Right cardiac atrium (tissue), 5 donors: ENCODE measurements at regions of chr5 and their contacts with region 1.

Region 1: GRCh38 chr5:45779874-45780671 is 83.9 kb upstream of the HCN1 start:
- DNase-seq: no peak
- ATAC-seq: no peak
- H3K4me3 ChIP-seq: no peak overlapping the region
- H3K27ac ChIP-seq: no peak overlapping the region
- H3K4me1 ChIP-seq: no peaks in the 10 kb centered on the region
- H3K27me3 ChIP-seq: no peaks in the 10 kb centered on the region

Region 2: GRCh38 chr5:44945743-44946142 is 834.3 kb before region 1 on chr5:
- intact Hi-C with region 1: loop called in 1 of 4 experiments (anchors 5 kb)
- DNase-seq: no peak
- ATAC-seq: no peak
- H3K4me3 ChIP-seq: no peak overlapping the region
- H3K27ac ChIP-seq: no peak overlapping the region
- H3K4me1 ChIP-seq: no peaks in the 10 kb centered on the region
- H3K27me3 ChIP-seq: no peaks in the 10 kb centered on the region

Region 3: GRCh38 chr5:45725537-45725936 is 54.5 kb before region 1 on chr5:
- intact Hi-C with region 1: no loop called
- DNase-seq: no peak
- ATAC-seq: no peak
- H3K4me3 ChIP-seq: no peak overlapping the region
- H3K27ac ChIP-seq: no peak overlapping the region
- H3K4me1 ChIP-seq: no peaks in the 10 kb centered on the region
- H3K27me3 ChIP-seq: no peaks in the 10 kb centered on the region